Endothelial cell of umbilical vein (primary cell): ENCODE measurements at regions of chrX and their contacts with region 1.

Region 1: GRCh38 chrX:136268051-136269048 is 17.1 kb upstream of the MAP7D3 start:
- DNase-seq: peak; percentile 52
- H3K4me3 ChIP-seq: no peak overlapping the region
- H3K27ac ChIP-seq: no peak overlapping the region
- H3K4me1 ChIP-seq: peaks cover 21% of the 10 kb centered on the region
- H3K27me3 ChIP-seq: no peaks in the 10 kb centered on the region
- CTCF ChIP-seq: peak; percentile 54 to 58
- POLR2A ChIP-seq: no peak

Region 2: DNA sequence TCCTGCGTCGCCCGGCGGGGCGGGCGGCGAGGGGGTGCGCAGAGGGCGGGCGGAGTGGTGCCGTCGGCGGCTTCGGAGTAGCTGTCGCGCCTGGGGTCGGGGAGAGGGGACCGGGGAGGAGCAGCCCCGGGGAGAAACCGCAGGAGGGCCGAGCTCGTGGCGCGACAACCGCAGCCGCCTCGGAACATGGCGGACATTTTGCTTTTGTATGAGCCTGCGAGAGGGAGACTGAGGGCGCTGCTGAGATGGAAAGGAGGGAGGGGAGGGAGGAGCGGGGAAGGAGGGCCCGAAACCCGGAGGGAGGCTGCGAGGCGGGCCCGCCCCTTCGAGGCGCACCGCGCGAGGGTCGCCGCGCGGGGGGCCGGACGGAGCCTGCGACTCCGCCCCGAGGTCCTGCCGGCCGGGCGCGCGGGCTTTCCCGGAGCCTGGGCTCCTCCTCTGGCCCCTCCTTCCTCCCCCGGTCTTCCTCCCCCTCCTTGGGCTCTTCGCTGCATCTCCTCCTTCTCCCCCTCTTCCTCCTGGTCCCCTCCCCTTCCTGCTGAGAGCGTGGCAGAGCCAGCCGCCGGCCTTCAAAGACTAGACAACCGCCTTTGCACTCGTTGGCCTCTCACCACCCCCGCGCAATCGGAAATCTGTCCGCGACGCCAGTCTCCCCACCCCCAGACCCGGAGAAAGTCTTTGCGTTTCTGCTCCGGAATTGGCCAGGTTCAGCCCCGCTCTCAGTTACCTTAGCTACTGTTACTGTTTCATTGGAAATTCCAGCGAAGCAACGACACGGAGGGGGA is 746.8 kb before region 1 on chrX:
- CTCF ChIA-PET with region 1: no interaction called
- POLR2A ChIA-PET with region 1: no interaction called
- dilution Hi-C with region 1: no loop called
- intact Hi-C with region 1: loop called (anchors 10 kb)
- DNase-seq: peak; percentile 87
- H3K4me3 ChIP-seq: peak overlapping the region; percentile 58 to 73 (median 65)
- H3K27ac ChIP-seq: peak overlapping the region; percentile 61
- H3K4me1 ChIP-seq: peaks cover 4% of the 10 kb centered on the region
- H3K27me3 ChIP-seq: no peaks in the 10 kb centered on the region
- CTCF ChIP-seq: no peak
- POLR2A ChIP-seq: peak; percentile 57

Region 3: GRCh38 chrX:136162831-136163570 is 105.3 kb before region 1 on chrX:
- CTCF ChIA-PET with region 1: interaction called, 15 read pairs
- POLR2A ChIA-PET with region 1: no interaction called
- dilution Hi-C with region 1: no loop called
- intact Hi-C with region 1: no loop called
- DNase-seq: peak; percentile 59
- H3K4me3 ChIP-seq: no peak overlapping the region
- H3K27ac ChIP-seq: no peak overlapping the region
- H3K4me1 ChIP-seq: no peaks in the 10 kb centered on the region
- H3K27me3 ChIP-seq: no peaks in the 10 kb centered on the region
- CTCF ChIP-seq: peak; percentile 61 to 71
- POLR2A ChIP-seq: no peak

Region 4: GRCh38 chrX:136200466-136200865 is 67.9 kb before region 1 on chrX:
- CTCF ChIA-PET with region 1: interaction called, 10 read pairs
- POLR2A ChIA-PET with region 1: no interaction called
- dilution Hi-C with region 1: no loop called
- intact Hi-C with region 1: no loop called
- DNase-seq: peak; percentile 45
- H3K4me3 ChIP-seq: no peak overlapping the region
- H3K27ac ChIP-seq: no peak overlapping the region
- H3K4me1 ChIP-seq: peaks cover 13% of the 10 kb centered on the region
- H3K27me3 ChIP-seq: no peaks in the 10 kb centered on the region
- CTCF ChIP-seq: peak; percentile 18 to 34
- POLR2A ChIP-seq: no peak

Region 5: GRCh38 chrX:136251041-136251991 is 17.0 kb before region 1 on chrX and contains the start of gene MAP7D3:
- CTCF ChIA-PET with region 1: interaction called, 21 read pairs
- POLR2A ChIA-PET with region 1: no interaction called
- dilution Hi-C with region 1: no loop called
- intact Hi-C with region 1: loop called (anchors 1 kb)
- DNase-seq: peak; percentile 29
- H3K4me3 ChIP-seq: peak within 1 kb of the TSS; percentile 69 to 84 (median 74)
- H3K27ac ChIP-seq: peak within 1 kb of the TSS; percentile 70
- H3K4me1 ChIP-seq: peaks cover 9% of the 10 kb centered on the region
- H3K27me3 ChIP-seq: no peaks in the 10 kb centered on the region
- CTCF ChIP-seq: no peak
- POLR2A ChIP-seq: peak; percentile 77
- total RNA-seq, gene MAP7D3: 20.0 and 22.8 TPM in 2 replicates

Region 6: GRCh38 chrX:136304493-136304892 is 36.1 kb after region 1 on chrX:
- CTCF ChIA-PET with region 1: no interaction called
- POLR2A ChIA-PET with region 1: no interaction called
- dilution Hi-C with region 1: no loop called
- intact Hi-C with region 1: no loop called
- DNase-seq: no peak
- H3K4me3 ChIP-seq: no peak overlapping the region
- H3K27ac ChIP-seq: no peak overlapping the region
- H3K4me1 ChIP-seq: no peaks in the 10 kb centered on the region
- H3K27me3 ChIP-seq: no peaks in the 10 kb centered on the region
- CTCF ChIP-seq: no peak
- POLR2A ChIP-seq: no peak

Region 7: DNA sequence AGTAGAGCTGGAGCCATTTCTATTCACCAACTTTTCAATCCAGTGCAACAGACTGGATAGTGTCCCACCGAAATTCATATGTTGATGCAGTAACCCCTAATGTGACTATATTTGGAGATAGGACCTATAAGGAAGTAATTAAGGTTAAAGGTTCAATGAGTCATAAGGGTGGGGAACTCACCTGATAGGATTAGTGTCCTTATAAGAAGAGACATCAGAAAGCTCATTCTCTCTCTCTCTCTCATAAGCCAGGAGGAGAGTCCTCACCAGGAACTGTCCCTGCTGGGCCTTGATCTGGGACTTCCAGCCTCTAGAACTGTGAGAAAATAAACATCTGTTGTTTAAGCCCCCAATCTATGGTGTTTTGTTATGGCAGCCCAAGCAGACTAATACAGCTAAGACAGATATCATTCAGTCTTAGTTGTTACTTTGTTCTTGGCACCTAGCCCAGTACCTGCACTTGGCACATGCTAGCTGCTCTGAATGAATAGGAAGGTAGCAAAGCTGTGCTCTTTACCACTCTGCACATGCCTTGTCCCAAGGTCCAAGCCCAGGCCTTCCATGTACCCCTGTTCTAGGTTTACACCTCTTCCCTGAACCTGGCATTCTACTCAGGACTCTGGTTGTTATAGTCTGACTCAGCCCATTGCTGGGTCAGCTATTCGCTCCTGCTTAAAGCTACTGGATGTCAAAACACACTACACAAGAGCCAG is 200.2 kb after region 1 on chrX:
- CTCF ChIA-PET with region 1: no interaction called
- POLR2A ChIA-PET with region 1: no interaction called
- dilution Hi-C with region 1: no loop called
- intact Hi-C with region 1: no loop called
- DNase-seq: no peak
- H3K4me3 ChIP-seq: no peak overlapping the region
- H3K27ac ChIP-seq: no peak overlapping the region
- H3K4me1 ChIP-seq: no peaks in the 10 kb centered on the region
- H3K27me3 ChIP-seq: no peaks in the 10 kb centered on the region
- CTCF ChIP-seq: no peak
- POLR2A ChIP-seq: no peak